ENCODE measurements at regions of chr3 and their contacts with region 1.

Region 1: DNA sequence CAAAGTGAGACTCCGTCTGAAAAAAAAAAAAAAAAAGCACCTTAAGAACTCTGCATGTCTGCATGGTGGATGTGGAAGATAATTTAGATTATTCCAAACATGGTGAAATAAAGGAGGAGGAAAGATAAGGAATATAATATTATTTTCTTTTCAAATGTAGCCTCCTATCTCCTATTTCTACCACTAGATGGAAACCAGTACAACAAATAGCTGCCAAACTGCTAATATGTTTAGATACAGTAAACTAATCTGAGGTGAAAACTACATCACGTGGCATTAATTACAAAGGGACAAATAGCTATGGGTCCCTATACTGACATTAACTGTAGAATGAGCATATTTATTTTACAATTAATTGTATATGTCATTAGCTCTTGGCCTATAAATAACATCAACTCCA is 197.8 kb downstream of the TBC1D5 start:
- DNase-seq: peak; percentile 17
- ATAC-seq: no peak
- H3K4me3 ChIP-seq: no peak overlapping the region
- H3K27ac ChIP-seq: no peak overlapping the region
- H3K4me1 ChIP-seq: no peaks in the 10 kb centered on the region
- H3K27me3 ChIP-seq: no peaks in the 10 kb centered on the region
- CTCF ChIP-seq: peak; percentile 59

Region 2: DNA sequence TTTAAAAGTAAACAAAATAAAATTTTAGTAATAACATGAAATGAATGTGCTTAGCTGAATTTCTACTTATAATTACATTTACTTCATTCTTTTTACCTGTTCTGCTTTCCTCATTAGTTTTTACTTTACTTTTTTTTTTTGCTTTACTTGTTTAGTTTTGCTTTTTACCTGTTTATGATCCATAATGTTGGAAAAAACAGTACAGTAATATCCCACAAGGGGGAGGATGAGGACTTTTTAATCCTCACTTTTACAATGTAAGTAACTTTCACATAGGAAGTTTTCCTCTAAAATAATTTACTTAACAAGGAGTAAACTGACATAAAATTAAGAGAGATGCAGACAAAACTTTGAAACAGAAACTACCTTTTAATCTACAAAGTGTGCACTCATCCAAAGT is 70.9 kb before region 1 on chr3:
- CTCF ChIA-PET with region 1: no interaction called
- POLR2A ChIA-PET with region 1: no interaction called
- intact Hi-C with region 1: no loop called
- DNase-seq: peak; percentile 40
- ATAC-seq: no peak
- H3K4me3 ChIP-seq: no peak overlapping the region
- H3K27ac ChIP-seq: no peak overlapping the region
- H3K4me1 ChIP-seq: peaks cover 8% of the 10 kb centered on the region; the same call in 1 of the 2 replicates
- H3K27me3 ChIP-seq: no peaks in the 10 kb centered on the region
- CTCF ChIP-seq: peak; percentile 66

Region 3: DNA sequence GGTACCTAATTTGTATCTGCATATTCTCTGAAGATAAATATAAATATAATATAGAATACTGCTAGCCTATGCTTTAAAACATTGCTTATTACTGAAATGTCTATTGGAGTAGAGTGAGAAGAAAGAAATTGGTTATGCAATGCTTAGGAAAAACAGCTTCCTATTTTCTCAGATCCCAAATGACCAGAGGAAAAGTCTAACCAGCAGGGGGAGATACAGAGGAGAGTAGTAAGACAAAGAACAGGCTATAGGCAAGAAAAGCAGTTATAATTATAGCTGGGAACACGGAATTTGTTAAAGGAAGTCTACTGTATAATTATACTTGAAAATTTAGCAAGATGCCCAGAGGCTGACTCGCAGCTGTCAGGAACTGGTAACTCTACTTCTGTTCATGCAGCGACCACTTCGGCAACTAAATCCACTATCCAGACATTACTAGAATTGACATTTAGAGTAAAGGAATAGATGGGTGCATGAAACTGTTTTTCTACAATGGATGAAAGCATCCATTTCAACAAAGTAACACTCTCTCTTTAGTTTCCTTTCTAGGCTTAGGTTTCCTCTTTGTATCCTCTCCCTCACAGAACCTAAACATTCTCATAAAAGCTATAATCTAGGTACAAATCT is 100.6 kb after region 1 on chr3:
- CTCF ChIA-PET with region 1: no interaction called
- POLR2A ChIA-PET with region 1: no interaction called
- intact Hi-C with region 1: loop called (anchors 10 kb)
- DNase-seq: peak; percentile 85
- ATAC-seq: peak; percentile 89
- H3K4me3 ChIP-seq: no peak overlapping the region
- H3K27ac ChIP-seq: no peak overlapping the region
- H3K4me1 ChIP-seq: peaks cover 4% of the 10 kb centered on the region; the same call in 1 of the 2 replicates
- H3K27me3 ChIP-seq: no peaks in the 10 kb centered on the region
- CTCF ChIP-seq: peak; percentile 85